Heart left ventricle (tissue), 16 donors: ENCODE measurements at regions of chr17 and their contacts with region 1.

Region 1: GRCh38 chr17:78970834-78971773 is 8.6 kb downstream of the LGALS3BP start:
- DNase-seq: peak; percentile 79 to 88 (median 84)
- ATAC-seq: peak in 3 of 4 donors; percentile 39 to 49 (median 43)
- H3K4me3 ChIP-seq: no peak overlapping the region
- H3K27ac ChIP-seq: peak overlapping the region in 9 of 12 donors; percentile 11 to 72 (median 51)
- H3K4me1 ChIP-seq: peaks cover 0 to 54% (median 26%) of the 10 kb centered on the region in 12 donors
- H3K27me3 ChIP-seq: no peaks in the 10 kb centered on the region
- CTCF ChIP-seq: peak; percentile 82 to 94 (median 88)
- POLR2A ChIP-seq: no peak

Region 2: GRCh38 chr17:78865682-78866390 is 105.3 kb before region 1 on chr17:
- intact Hi-C with region 1: loop called (anchors 1 to 2 kb)
- DNase-seq: peak; percentile 81 to 87 (median 83)
- ATAC-seq: peak; percentile 64 to 85 (median 78)
- H3K4me3 ChIP-seq: peak overlapping the region in 7 of 12 donors; percentile 11 to 37 (median 31)
- H3K27ac ChIP-seq: peak overlapping the region in 7 of 12 donors; percentile 21 to 56 (median 30)
- H3K4me1 ChIP-seq: peaks cover 0 to 34% (median 11%) of the 10 kb centered on the region in 12 donors
- H3K27me3 ChIP-seq: no peaks in the 10 kb centered on the region
- CTCF ChIP-seq: peak; percentile 85 to 98 (median 94)
- POLR2A ChIP-seq: no peak

Region 3: GRCh38 chr17:79019632-79020584 is 48.8 kb after region 1 on chr17:
- intact Hi-C with region 1: no loop called
- DNase-seq: peak; percentile 58 to 86 (median 74)
- ATAC-seq: peak; percentile 29 to 44 (median 36)
- H3K4me3 ChIP-seq: peak overlapping the region in 2 of 12 donors; percentile 1 to 10
- H3K27ac ChIP-seq: peak overlapping the region; percentile 21 to 98 (median 80)
- H3K4me1 ChIP-seq: peaks cover 0 to 54% (median 46%) of the 10 kb centered on the region in 12 donors
- H3K27me3 ChIP-seq: peaks cover 0 to 28% (median 0%) of the 10 kb centered on the region in 9 donors
- CTCF ChIP-seq: peak; percentile 57 to 82 (median 75)
- POLR2A ChIP-seq: no peak